ENCODE measurements at regions of chr21 and their contacts with region 1.

Region 1: DNA sequence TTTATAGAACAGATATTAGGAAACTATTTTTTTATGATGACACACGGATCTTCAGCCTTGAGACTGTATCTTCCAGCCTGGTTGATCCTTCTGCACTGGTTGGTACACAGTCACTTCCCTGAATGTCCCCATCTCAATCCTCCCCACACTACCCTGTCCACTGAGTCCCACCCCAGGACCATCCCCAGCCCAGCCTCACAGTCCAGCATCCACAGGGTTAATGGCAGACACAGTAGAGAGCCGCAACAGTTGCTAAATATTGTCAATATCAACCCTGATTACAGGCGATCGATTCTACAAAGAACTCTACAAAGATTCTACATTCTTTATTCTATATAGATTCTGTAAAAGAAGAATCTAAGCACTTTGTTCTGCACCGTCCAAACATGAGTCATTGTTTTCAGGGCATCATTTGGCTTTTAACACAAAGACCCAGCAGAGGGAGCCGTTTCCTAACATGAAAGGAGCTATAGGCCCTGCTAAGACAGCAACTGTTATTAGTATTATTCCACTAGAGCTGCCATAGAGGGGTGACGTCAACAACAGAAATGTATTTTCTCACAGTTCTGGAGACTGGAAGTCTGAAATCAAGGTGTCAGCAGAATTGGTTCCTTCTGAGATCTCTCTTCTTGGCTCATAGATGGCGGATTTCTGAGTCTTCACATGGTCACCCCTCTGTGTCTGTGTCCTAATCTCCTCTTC is 30.1 kb upstream of the IFNAR2 start:
- DNase-seq: peak; percentile 88
- ATAC-seq: peak; percentile 76
- H3K4me3 ChIP-seq: no peak overlapping the region
- H3K27ac ChIP-seq: no peak overlapping the region
- H3K4me1 ChIP-seq: peaks cover 31% of the 10 kb centered on the region
- H3K27me3 ChIP-seq: peaks cover 0 to 20% of the 10 kb centered on the region in 2 experiments; a peak in 2 of 5 replicates
- CTCF ChIP-seq: peak; percentile 89
- EP300 ChIP-seq: no peak
- POLR2A ChIP-seq: no peak
- RAD21 ChIP-seq: peak; percentile 86

Region 2: GRCh38 chr21:32921632-32922230 is 277.9 kb before region 1 on chr21:
- CTCF ChIA-PET with region 1: interaction called, 4 read pairs
- POLR2A ChIA-PET with region 1: no interaction called
- in situ Hi-C with region 1: no loop called
- intact Hi-C with region 1: loop called (anchors 1 kb)
- DNase-seq: no peak
- ATAC-seq: peak; percentile 38; the same call in 1 of the 3 replicates
- H3K4me3 ChIP-seq: no peak overlapping the region
- H3K27ac ChIP-seq: no peak overlapping the region
- H3K4me1 ChIP-seq: peaks cover 7% of the 10 kb centered on the region; the same call in 1 of the 2 replicates
- H3K27me3 ChIP-seq: peaks cover 0 to 9% of the 10 kb centered on the region in 2 experiments; a peak in 2 of 5 replicates
- CTCF ChIP-seq: peak; percentile 31; the same call in 1 of the 2 replicates
- EP300 ChIP-seq: no peak
- POLR2A ChIP-seq: no peak
- RAD21 ChIP-seq: no peak

Region 3: DNA sequence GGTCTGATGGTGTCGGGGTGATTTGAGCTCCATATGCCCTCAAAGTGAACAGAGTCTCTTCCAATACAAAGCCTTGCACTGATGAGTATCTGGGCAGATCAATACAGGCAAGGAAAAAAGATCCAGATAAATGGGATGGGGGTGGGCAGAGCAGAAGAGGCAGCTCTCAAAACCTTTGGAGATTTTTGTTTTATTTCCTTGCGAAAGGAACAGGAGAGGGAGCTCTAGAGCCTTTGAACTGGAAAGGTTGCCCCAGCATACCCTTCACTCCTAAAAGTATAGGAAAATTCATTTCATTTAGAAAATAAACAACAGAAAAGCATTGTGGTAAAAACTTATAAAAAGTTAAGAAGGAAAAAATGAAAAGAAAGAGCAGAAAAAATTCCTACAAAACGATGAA is 205.4 kb before region 1 on chr21:
- CTCF ChIA-PET with region 1: interaction called, 14 read pairs
- POLR2A ChIA-PET with region 1: no interaction called
- in situ Hi-C with region 1: loop called (anchors 10 kb)
- intact Hi-C with region 1: loop called (anchors 1 kb)
- DNase-seq: no peak
- ATAC-seq: 0 out of 3 replicates have a peak, but pooled peaks have one; percentile 37
- H3K4me3 ChIP-seq: no peak overlapping the region
- H3K27ac ChIP-seq: no peak overlapping the region
- H3K4me1 ChIP-seq: no peaks in the 10 kb centered on the region
- H3K27me3 ChIP-seq: peaks cover 0 to 5% of the 10 kb centered on the region in 2 experiments; a peak in 1 of 5 replicates
- CTCF ChIP-seq: peak; percentile 44
- EP300 ChIP-seq: no peak
- POLR2A ChIP-seq: no peak
- RAD21 ChIP-seq: no peak

Region 4: GRCh38 chr21:33185852-33186251 is 13.8 kb before region 1 on chr21:
- CTCF ChIA-PET with region 1: no interaction called
- POLR2A ChIA-PET with region 1: no interaction called
- in situ Hi-C with region 1: no loop called
- intact Hi-C with region 1: no loop called
- DNase-seq: no peak
- ATAC-seq: no peak
- H3K4me3 ChIP-seq: no peak overlapping the region
- H3K27ac ChIP-seq: no peak overlapping the region
- H3K4me1 ChIP-seq: no peaks in the 10 kb centered on the region
- H3K27me3 ChIP-seq: peaks cover 0 to 13% of the 10 kb centered on the region in 2 experiments; a peak in 2 of 5 replicates
- CTCF ChIP-seq: no peak
- EP300 ChIP-seq: no peak
- POLR2A ChIP-seq: no peak
- RAD21 ChIP-seq: no peak

Region 5: DNA sequence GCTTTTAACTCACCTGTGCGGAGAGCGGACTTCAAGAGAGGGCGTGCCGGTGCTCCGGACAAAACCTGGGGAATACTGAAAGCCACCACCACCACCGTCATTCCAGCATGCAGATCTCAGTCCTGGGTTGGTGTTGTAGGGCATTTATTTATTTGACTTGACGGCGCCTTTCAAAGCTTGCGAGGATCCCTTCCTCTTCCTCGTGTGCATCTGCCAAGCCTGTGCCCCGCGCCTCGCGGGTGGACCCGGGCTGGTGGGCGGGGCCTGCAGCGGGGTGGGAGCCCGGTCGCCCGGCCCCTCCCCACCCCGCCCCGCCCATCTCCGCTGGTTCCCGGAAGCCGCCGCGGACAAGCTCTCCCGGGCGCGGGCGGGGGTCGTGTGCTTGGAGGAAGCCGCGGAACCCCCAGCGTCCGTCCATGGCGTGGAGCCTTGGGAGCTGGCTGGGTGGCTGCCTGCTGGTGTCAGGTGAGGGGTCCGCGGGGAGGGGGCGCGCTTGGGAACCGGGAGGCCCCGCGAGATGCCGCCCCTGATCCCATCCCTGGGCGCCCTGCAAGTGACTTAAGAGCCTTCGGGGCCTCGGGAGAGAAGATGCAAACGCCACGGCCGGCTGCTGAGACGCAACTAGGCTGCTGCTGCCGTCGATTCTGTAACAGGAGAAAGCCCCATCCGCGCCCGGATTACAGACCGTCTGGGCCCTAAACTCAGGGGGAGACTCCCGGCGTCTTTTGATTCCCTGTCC is 66.6 kb after region 1 on chr21 and contains the start of gene IL10RB:
- CTCF ChIA-PET with region 1: no interaction called
- POLR2A ChIA-PET with region 1: interaction called, 4 read pairs
- in situ Hi-C with region 1: no loop called
- intact Hi-C with region 1: loop called (anchors 5 kb)
- DNase-seq: peak; percentile 29
- ATAC-seq: peak; percentile 85
- H3K4me3 ChIP-seq: peak within 1 kb of the TSS; percentile 85 to 89 (median 85)
- H3K27ac ChIP-seq: peak within 1 kb of the TSS; percentile 62
- H3K4me1 ChIP-seq: peaks cover 50% of the 10 kb centered on the region
- H3K27me3 ChIP-seq: no peaks in the 10 kb centered on the region; a peak in 1 of 5 replicates
- CTCF ChIP-seq: peak; percentile 22; the same call in 1 of the 2 replicates
- EP300 ChIP-seq: no peak
- POLR2A ChIP-seq: peak in 1 of 2 experiments; percentile 68; a peak in 2 of 4 replicates
- RAD21 ChIP-seq: no peak
- total RNA-seq, gene IL10RB: 10.7 and 17.4 TPM in 2 replicates

Region 6: GRCh38 chr21:33360881-33361602 is 161.4 kb after region 1 on chr21:
- CTCF ChIA-PET with region 1: interaction called, 22 read pairs
- POLR2A ChIA-PET with region 1: interaction called, 3 read pairs
- in situ Hi-C with region 1: loop called (anchors 5 kb)
- intact Hi-C with region 1: no loop called
- DNase-seq: peak; percentile 50
- ATAC-seq: peak; percentile 96
- H3K4me3 ChIP-seq: peak overlapping the region; percentile 27 to 41 (median 40); a peak in 2 of 6 replicates
- H3K27ac ChIP-seq: no peak overlapping the region
- H3K4me1 ChIP-seq: peaks cover 38% of the 10 kb centered on the region
- H3K27me3 ChIP-seq: no peaks in the 10 kb centered on the region
- CTCF ChIP-seq: peak; percentile 93
- EP300 ChIP-seq: no peak
- POLR2A ChIP-seq: no peak
- RAD21 ChIP-seq: 0 out of 2 replicates have a peak, but pooled peaks have one; percentile 27

Region 7: GRCh38 chr21:33441489-33442477 is 242.1 kb after region 1 on chr21:
- CTCF ChIA-PET with region 1: interaction called, 12 read pairs
- POLR2A ChIA-PET with region 1: no interaction called
- in situ Hi-C with region 1: loop called (anchors 5 kb)
- intact Hi-C with region 1: loop called (anchors 1 kb)
- DNase-seq: no peak
- ATAC-seq: no peak
- H3K4me3 ChIP-seq: no peak overlapping the region
- H3K27ac ChIP-seq: no peak overlapping the region
- H3K4me1 ChIP-seq: no peaks in the 10 kb centered on the region
- H3K27me3 ChIP-seq: no peaks in the 10 kb centered on the region
- CTCF ChIP-seq: no peak
- EP300 ChIP-seq: no peak
- POLR2A ChIP-seq: no peak
- RAD21 ChIP-seq: no peak